ENCODE measurements at regions of chr14 and their contacts with region 1.

Region 1: GRCh38 chr14:49867831-49868723 is 15.5 kb upstream of the NEMF start:
- DNase-seq: peak; percentile 96 to 99 (median 98)
- ATAC-seq: peak; percentile 89
- H3K4me3 ChIP-seq: peak overlapping the region; percentile 63
- H3K4me3 Mint-ChIP-seq: peak overlapping the region; percentile 89
- H3K27ac ChIP-seq: peak overlapping the region; percentile 93
- H3K27ac Mint-ChIP-seq: peak overlapping the region; percentile 89
- H3K4me1 ChIP-seq: peaks cover 36% of the 10 kb centered on the region
- H3K4me1 Mint-ChIP-seq: peaks cover 14% of the 10 kb centered on the region
- H3K27me3 ChIP-seq: no peaks in the 10 kb centered on the region
- H3K27me3 Mint-ChIP-seq: no peaks in the 10 kb centered on the region
- CTCF ChIP-seq: no peak

Region 2: GRCh38 chr14:49641697-49642129 is 226.4 kb before region 1 on chr14:
- CTCF ChIA-PET with region 1: no interaction called
- POLR2A ChIA-PET with region 1: no interaction called
- intact Hi-C with region 1: no loop called
- DNase-seq: no peak
- ATAC-seq: no peak
- H3K4me3 ChIP-seq: no peak overlapping the region
- H3K4me3 Mint-ChIP-seq: no peak overlapping the region
- H3K27ac ChIP-seq: no peak overlapping the region
- H3K27ac Mint-ChIP-seq: peak overlapping the region; percentile 60
- H3K4me1 ChIP-seq: peaks cover 36% of the 10 kb centered on the region
- H3K4me1 Mint-ChIP-seq: peaks cover 59% of the 10 kb centered on the region
- H3K27me3 ChIP-seq: no peaks in the 10 kb centered on the region
- H3K27me3 Mint-ChIP-seq: no peaks in the 10 kb centered on the region
- CTCF ChIP-seq: no peak

Region 3: DNA sequence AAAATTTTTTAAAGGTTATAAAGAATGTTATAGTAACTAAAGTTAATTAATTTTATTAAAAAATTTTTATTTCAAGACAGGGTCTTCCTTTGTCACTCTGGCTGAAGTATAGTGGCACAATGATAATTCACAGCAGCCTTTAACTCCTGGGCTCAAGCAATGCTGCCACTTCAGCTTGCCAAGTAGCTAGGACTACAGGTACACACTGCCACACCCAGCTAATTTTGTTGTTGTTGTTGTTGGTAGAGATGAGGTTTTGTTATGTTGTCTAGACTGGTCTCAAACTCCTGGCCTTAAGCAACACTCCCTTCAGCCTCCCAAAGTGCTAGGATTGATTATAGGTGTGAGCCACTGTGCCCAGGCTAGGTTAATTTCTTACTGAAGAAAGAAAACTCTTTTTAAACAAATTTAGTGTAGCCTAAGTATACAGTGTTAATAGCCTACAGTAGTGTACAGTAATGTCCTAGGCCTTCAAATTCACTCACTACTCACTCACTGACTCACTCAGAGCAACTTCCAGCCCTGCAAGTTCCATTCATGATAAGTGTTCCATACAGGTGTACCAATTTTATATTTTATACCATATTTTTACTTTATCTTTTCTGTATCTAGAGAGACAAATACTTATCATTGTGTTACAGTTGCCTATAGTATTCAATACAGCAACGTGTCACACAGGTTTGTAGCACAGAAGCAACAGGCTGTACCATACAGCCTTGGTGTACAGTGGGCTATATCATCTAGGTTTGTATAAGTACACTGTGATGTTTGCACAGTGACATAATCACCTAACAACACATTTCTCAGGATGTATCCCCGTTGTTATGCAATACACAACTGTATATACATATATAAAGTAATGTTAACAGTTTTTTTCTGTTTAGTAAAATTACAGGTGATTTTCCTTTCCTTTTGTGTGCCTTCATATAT is 208.3 kb before region 1 on chr14:
- CTCF ChIA-PET with region 1: no interaction called
- POLR2A ChIA-PET with region 1: no interaction called
- intact Hi-C with region 1: no loop called
- DNase-seq: no peak
- ATAC-seq: no peak
- H3K4me3 ChIP-seq: no peak overlapping the region
- H3K4me3 Mint-ChIP-seq: no peak overlapping the region
- H3K27ac ChIP-seq: no peak overlapping the region
- H3K27ac Mint-ChIP-seq: no peak overlapping the region
- H3K4me1 ChIP-seq: no peaks in the 10 kb centered on the region
- H3K4me1 Mint-ChIP-seq: peaks cover 4% of the 10 kb centered on the region
- H3K27me3 ChIP-seq: no peaks in the 10 kb centered on the region
- H3K27me3 Mint-ChIP-seq: no peaks in the 10 kb centered on the region
- CTCF ChIP-seq: no peak

Region 4: GRCh38 chr14:49767562-49768300 is 100.3 kb before region 1 on chr14 and contains the start of gene KLHDC2:
- CTCF ChIA-PET with region 1: interaction called, 4 read pairs
- POLR2A ChIA-PET with region 1: interaction called, 50 read pairs
- intact Hi-C with region 1: no loop called
- DNase-seq: peak; percentile 78 to 95 (median 87)
- ATAC-seq: peak; percentile 65
- H3K4me3 ChIP-seq: peak within 1 kb of the TSS; percentile 96
- H3K4me3 Mint-ChIP-seq: peak within 1 kb of the TSS; percentile 100
- H3K27ac ChIP-seq: peak within 1 kb of the TSS; percentile 93 to 95
- H3K27ac Mint-ChIP-seq: peak within 1 kb of the TSS; percentile 99
- H3K4me1 ChIP-seq: peaks cover 35% of the 10 kb centered on the region
- H3K4me1 Mint-ChIP-seq: peaks cover 45% of the 10 kb centered on the region
- H3K27me3 ChIP-seq: no peaks in the 10 kb centered on the region
- H3K27me3 Mint-ChIP-seq: no peaks in the 10 kb centered on the region
- CTCF ChIP-seq: no peak
- total RNA-seq, gene KLHDC2: 142 to 143 TPM

Region 5: DNA sequence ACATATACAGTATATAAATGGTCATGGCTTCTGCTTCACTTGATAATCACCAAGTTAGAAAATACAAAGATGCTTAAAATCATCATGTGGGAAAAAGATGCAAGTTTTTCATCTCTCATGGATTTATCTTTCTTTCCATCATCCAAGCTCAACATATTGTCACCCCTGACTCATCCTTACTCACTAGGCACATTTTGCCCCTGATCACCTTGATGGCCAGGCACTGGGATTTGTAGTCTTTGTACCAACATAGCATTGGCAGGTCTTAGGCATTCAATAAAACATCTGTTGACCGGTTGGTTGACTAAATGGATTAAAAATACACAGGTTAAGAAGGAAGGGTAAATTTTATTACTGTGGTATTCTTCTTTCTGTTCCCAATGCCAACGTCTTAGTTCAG is 72.1 kb before region 1 on chr14:
- CTCF ChIA-PET with region 1: no interaction called
- POLR2A ChIA-PET with region 1: no interaction called
- intact Hi-C with region 1: no loop called
- DNase-seq: no peak
- ATAC-seq: no peak
- H3K4me3 ChIP-seq: no peak overlapping the region
- H3K4me3 Mint-ChIP-seq: no peak overlapping the region
- H3K27ac ChIP-seq: no peak overlapping the region
- H3K27ac Mint-ChIP-seq: no peak overlapping the region
- H3K4me1 ChIP-seq: no peaks in the 10 kb centered on the region
- H3K4me1 Mint-ChIP-seq: no peaks in the 10 kb centered on the region
- H3K27me3 ChIP-seq: no peaks in the 10 kb centered on the region
- H3K27me3 Mint-ChIP-seq: no peaks in the 10 kb centered on the region
- CTCF ChIP-seq: no peak

Region 6: GRCh38 chr14:49879683-49880204 is 11.7 kb after region 1 on chr14:
- CTCF ChIA-PET with region 1: interaction called, 13 read pairs
- POLR2A ChIA-PET with region 1: interaction called, 19 read pairs
- intact Hi-C with region 1: no loop called
- DNase-seq: peak; percentile 22 to 86 (median 38)
- ATAC-seq: peak; percentile 94
- H3K4me3 ChIP-seq: no peak overlapping the region
- H3K4me3 Mint-ChIP-seq: no peak overlapping the region
- H3K27ac ChIP-seq: no peak overlapping the region
- H3K27ac Mint-ChIP-seq: peak overlapping the region; percentile 64
- H3K4me1 ChIP-seq: peaks cover 17% of the 10 kb centered on the region
- H3K4me1 Mint-ChIP-seq: peaks cover 18% of the 10 kb centered on the region
- H3K27me3 ChIP-seq: no peaks in the 10 kb centered on the region
- H3K27me3 Mint-ChIP-seq: no peaks in the 10 kb centered on the region
- CTCF ChIP-seq: peak; percentile 46

Region 7: GRCh38 chr14:49971156-49972130 is 103.4 kb after region 1 on chr14:
- CTCF ChIA-PET with region 1: interaction called, 11 read pairs
- POLR2A ChIA-PET with region 1: interaction called, 86 read pairs
- intact Hi-C with region 1: loop called in 1 of 2 experiments (anchors 2 kb)
- DNase-seq: peak in 13 of 14 experiments; percentile 16 to 87 (median 55)
- ATAC-seq: peak; percentile 84
- H3K4me3 ChIP-seq: peak overlapping the region; percentile 30
- H3K4me3 Mint-ChIP-seq: peak overlapping the region; percentile 50
- H3K27ac ChIP-seq: peak overlapping the region; percentile 80 to 85
- H3K27ac Mint-ChIP-seq: peak overlapping the region; percentile 90
- H3K4me1 ChIP-seq: peaks cover 66% of the 10 kb centered on the region
- H3K4me1 Mint-ChIP-seq: peaks cover 59% of the 10 kb centered on the region
- H3K27me3 ChIP-seq: no peaks in the 10 kb centered on the region
- H3K27me3 Mint-ChIP-seq: no peaks in the 10 kb centered on the region
- CTCF ChIP-seq: no peak

Region 8: GRCh38 chr14:50099335-50099734 is 231.3 kb after region 1 on chr14:
- CTCF ChIA-PET with region 1: interaction called, 10 read pairs
- POLR2A ChIA-PET with region 1: interaction called, 61 read pairs
- intact Hi-C with region 1: no loop called
- DNase-seq: peak in 1 of 14 experiments; percentile 39
- ATAC-seq: no peak
- H3K4me3 ChIP-seq: no peak overlapping the region
- H3K4me3 Mint-ChIP-seq: peak overlapping the region; percentile 12
- H3K27ac ChIP-seq: no peak overlapping the region
- H3K27ac Mint-ChIP-seq: peak overlapping the region; percentile 79
- H3K4me1 ChIP-seq: peaks cover 47% of the 10 kb centered on the region
- H3K4me1 Mint-ChIP-seq: peaks cover 64% of the 10 kb centered on the region
- H3K27me3 ChIP-seq: no peaks in the 10 kb centered on the region
- H3K27me3 Mint-ChIP-seq: no peaks in the 10 kb centered on the region
- CTCF ChIP-seq: no peak

Region 9: GRCh38 chr14:50116181-50116956 is 248.3 kb after region 1 on chr14 and contains the start of gene VCPKMT:
- CTCF ChIA-PET with region 1: interaction called, 40 read pairs
- POLR2A ChIA-PET with region 1: interaction called, 77 read pairs
- intact Hi-C with region 1: no loop called
- DNase-seq: peak; percentile 90 to 98 (median 96)
- ATAC-seq: peak; percentile 98
- H3K4me3 ChIP-seq: peak within 1 kb of the TSS; percentile 75
- H3K4me3 Mint-ChIP-seq: peak within 1 kb of the TSS; percentile 99
- H3K27ac ChIP-seq: peak within 1 kb of the TSS; percentile 81 to 95
- H3K27ac Mint-ChIP-seq: peak within 1 kb of the TSS; percentile 99
- H3K4me1 ChIP-seq: peaks cover 15% of the 10 kb centered on the region
- H3K4me1 Mint-ChIP-seq: peaks cover 31% of the 10 kb centered on the region
- H3K27me3 ChIP-seq: no peaks in the 10 kb centered on the region
- H3K27me3 Mint-ChIP-seq: no peaks in the 10 kb centered on the region
- CTCF ChIP-seq: no peak
- total RNA-seq, gene VCPKMT: 30.4 to 32.4 TPM

Region 10: DNA sequence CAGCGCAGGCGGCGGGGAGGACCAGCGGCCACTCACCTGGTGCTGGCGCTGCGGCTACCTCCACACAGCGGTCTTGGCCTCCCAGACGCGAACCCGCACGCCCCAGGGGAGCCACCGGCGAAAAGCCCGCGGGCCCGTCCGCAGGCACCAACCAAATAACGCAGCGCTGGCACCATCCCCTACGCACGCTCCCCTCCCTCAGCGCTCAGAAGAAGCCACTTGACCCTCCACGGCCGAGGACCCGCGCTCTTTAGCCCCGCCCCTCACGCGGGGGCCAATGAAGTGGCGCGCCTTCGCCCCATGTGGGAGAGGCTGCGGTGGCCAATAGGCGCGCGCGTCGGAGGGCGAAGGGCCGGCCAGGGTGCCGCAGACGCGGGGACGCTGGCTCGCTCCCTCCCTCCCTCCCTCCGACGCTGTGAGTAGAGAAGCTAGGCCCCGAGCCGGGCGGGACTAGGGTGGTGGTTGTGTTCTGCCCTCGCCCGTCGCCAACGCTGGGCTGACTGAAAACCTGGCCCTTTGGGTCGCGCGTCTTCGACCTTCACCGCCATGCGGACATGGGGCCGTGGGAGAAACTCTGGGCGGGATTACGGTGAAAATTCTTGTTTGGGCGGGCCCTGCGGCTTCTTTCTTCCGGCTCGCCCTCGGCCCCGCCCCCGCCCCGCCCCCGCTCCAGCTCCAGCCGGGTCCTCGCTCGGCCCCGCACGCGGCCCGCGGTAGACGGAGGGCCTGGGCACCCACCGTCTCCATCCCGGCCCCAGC is 444.1 kb after region 1 on chr14 and contains the starts of genes DMAC2L and L2HGDH:
- CTCF ChIA-PET with region 1: no interaction called
- POLR2A ChIA-PET with region 1: no interaction called
- intact Hi-C with region 1: loop called (anchors 10 kb)
- DNase-seq: peak; percentile 72 to 94 (median 84)
- ATAC-seq: peak; percentile 85
- H3K4me3 ChIP-seq: peak within 1 kb of the TSS; percentile 90
- H3K4me3 Mint-ChIP-seq: peak within 1 kb of the TSS; percentile 97
- H3K27ac ChIP-seq: peak within 1 kb of the TSS; percentile 85 to 90
- H3K27ac Mint-ChIP-seq: peak within 1 kb of the TSS; percentile 98
- H3K4me1 ChIP-seq: peaks cover 23% of the 10 kb centered on the region
- H3K4me1 Mint-ChIP-seq: peaks cover 57% of the 10 kb centered on the region
- H3K27me3 ChIP-seq: no peaks in the 10 kb centered on the region
- H3K27me3 Mint-ChIP-seq: no peaks in the 10 kb centered on the region
- CTCF ChIP-seq: no peak
- total RNA-seq, gene DMAC2L: 10.8 to 13.4 TPM
- total RNA-seq, gene L2HGDH: 1.7 to 3.1 TPM

Measured in CD4-positive, alpha-beta T cell (primary cell).